CD4-positive, alpha-beta memory T cell (primary cell): ENCODE measurements at regions of chr10 and their contacts with region 1.

Region 1: DNA sequence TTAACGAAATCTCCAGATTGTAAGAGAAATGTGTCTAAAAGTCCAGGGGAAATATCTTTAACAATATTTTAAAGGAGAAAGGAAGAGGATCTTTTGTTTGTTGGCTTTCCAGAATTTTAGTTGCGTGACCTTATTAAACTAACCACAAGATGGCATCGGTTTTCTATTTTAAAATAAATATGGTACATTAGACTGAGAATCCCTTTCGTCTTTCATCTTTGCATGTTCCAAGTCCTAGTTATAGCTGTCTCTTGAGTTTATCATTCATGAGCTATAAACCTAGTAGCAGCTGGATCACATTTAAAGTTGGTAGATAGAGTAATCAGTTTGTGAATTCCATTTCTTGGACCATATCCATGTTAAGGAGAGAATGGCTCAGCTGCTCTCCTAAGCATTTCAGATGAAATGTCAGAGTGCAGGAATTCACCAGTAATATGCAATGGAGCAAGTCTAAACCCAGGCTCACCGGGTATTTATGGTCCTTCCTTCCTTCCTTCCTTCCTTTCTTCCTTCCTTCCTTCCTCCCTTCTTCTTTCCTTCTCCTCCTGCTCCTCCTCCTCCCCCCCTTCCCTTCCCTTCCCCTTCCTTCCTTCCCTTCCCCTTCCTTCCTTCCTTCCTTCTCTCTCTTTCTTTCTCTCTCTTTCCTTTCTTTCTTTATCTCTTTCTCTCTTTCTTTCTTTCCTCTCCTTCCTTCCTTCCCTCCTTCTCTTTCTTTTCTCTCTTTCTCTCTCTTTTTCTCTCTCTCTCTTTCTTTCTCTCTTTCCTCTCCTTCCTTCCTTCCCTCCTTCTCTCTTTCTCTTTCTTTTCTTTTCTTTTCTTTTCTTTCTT is 57.8 kb upstream of the RAB18 start:
- DNase-seq: peak in 4 of 5 donors; percentile 46 to 50 (median 47)
- H3K4me3 ChIP-seq: no peak overlapping the region
- H3K4me3 Mint-ChIP-seq: peak overlapping the region in 3 of 8 donors; percentile 13 to 41 (median 36)
- H3K27ac ChIP-seq: no peak overlapping the region
- H3K27ac Mint-ChIP-seq: peak overlapping the region in 2 of 7 donors; percentile 8 to 45
- H3K4me1 ChIP-seq: peaks cover 12% of the 10 kb centered on the region
- H3K4me1 Mint-ChIP-seq: peaks cover 3 to 17% (median 13%) of the 10 kb centered on the region in 4 donors
- H3K27me3 ChIP-seq: no peaks in the 10 kb centered on the region
- H3K27me3 Mint-ChIP-seq: no peaks in the 10 kb centered on the region

Region 2: GRCh38 chr10:27464993-27465392 is 18.7 kb after region 1 on chr10:
- CTCF ChIA-PET with region 1: interaction called, 5 read pairs
- POLR2A ChIA-PET with region 1: interaction called, 5 read pairs
- intact Hi-C with region 1: loop called (anchors 1 kb)
- DNase-seq: peak; percentile 39 to 52 (median 50)
- H3K4me3 ChIP-seq: no peak overlapping the region
- H3K4me3 Mint-ChIP-seq: peak overlapping the region in 7 of 8 donors; percentile 61 to 76 (median 65)
- H3K27ac ChIP-seq: peak overlapping the region; percentile 2
- H3K27ac Mint-ChIP-seq: peak overlapping the region; percentile 79 to 94 (median 92)
- H3K4me1 ChIP-seq: peaks cover 26% of the 10 kb centered on the region
- H3K4me1 Mint-ChIP-seq: peaks cover 30 to 42% (median 36%) of the 10 kb centered on the region in 4 donors
- H3K27me3 ChIP-seq: no peaks in the 10 kb centered on the region
- H3K27me3 Mint-ChIP-seq: no peaks in the 10 kb centered on the region

Region 3: DNA sequence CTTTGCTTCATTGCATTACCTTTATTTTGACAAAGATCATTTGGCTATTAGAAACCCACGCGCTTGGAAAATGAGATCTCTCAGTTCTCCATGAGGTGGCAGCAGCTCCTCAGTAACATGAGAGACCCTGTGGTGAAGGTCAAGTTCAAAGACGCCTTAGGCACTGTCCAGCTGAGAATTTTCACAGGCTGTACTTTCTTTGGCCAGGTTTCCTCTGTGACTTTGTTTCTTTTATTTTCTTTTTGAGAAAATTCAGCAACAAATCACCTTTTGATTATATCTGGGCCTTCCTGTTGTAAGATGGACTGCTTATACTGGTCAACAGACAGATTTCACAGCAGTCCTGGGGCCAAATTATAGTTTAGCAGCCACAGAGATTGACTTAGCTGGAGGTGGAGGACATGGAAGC is 112.3 kb after region 1 on chr10:
- CTCF ChIA-PET with region 1: interaction called, 18 read pairs
- POLR2A ChIA-PET with region 1: no interaction called
- intact Hi-C with region 1: loop called (anchors 5 kb)
- DNase-seq: peak in 3 of 5 donors; percentile 19 to 38 (median 31)
- H3K4me3 ChIP-seq: no peak overlapping the region
- H3K4me3 Mint-ChIP-seq: no peak overlapping the region
- H3K27ac ChIP-seq: no peak overlapping the region
- H3K27ac Mint-ChIP-seq: no peak overlapping the region
- H3K4me1 ChIP-seq: no peaks in the 10 kb centered on the region
- H3K4me1 Mint-ChIP-seq: peaks cover 0 to 7% (median under 1%) of the 10 kb centered on the region in 4 donors
- H3K27me3 ChIP-seq: no peaks in the 10 kb centered on the region
- H3K27me3 Mint-ChIP-seq: no peaks in the 10 kb centered on the region

Region 4: GRCh38 chr10:27655296-27655695 is 209.0 kb after region 1 on chr10:
- CTCF ChIA-PET with region 1: interaction called, 16 read pairs
- POLR2A ChIA-PET with region 1: interaction called, 4 read pairs
- intact Hi-C with region 1: no loop called
- DNase-seq: no peak
- H3K4me3 ChIP-seq: no peak overlapping the region
- H3K4me3 Mint-ChIP-seq: no peak overlapping the region
- H3K27ac ChIP-seq: no peak overlapping the region
- H3K27ac Mint-ChIP-seq: peak overlapping the region in 2 of 7 donors; percentile 48 to 68
- H3K4me1 ChIP-seq: no peaks in the 10 kb centered on the region
- H3K4me1 Mint-ChIP-seq: peaks cover 0 to 9% (median 2%) of the 10 kb centered on the region in 4 donors
- H3K27me3 ChIP-seq: no peaks in the 10 kb centered on the region
- H3K27me3 Mint-ChIP-seq: peaks cover 8 to 9% of the 10 kb centered on the region in 2 donors

Region 5: GRCh38 chr10:27661514-27662286 is 215.4 kb after region 1 on chr10:
- CTCF ChIA-PET with region 1: interaction called, 16 read pairs
- POLR2A ChIA-PET with region 1: no interaction called
- intact Hi-C with region 1: no loop called
- DNase-seq: no peak
- H3K4me3 ChIP-seq: no peak overlapping the region
- H3K4me3 Mint-ChIP-seq: no peak overlapping the region
- H3K27ac ChIP-seq: no peak overlapping the region
- H3K27ac Mint-ChIP-seq: no peak overlapping the region
- H3K4me1 ChIP-seq: no peaks in the 10 kb centered on the region
- H3K4me1 Mint-ChIP-seq: peaks cover 0 to 4% (median under 1%) of the 10 kb centered on the region in 4 donors
- H3K27me3 ChIP-seq: peaks cover 7% of the 10 kb centered on the region
- H3K27me3 Mint-ChIP-seq: peaks cover 15 to 16% of the 10 kb centered on the region in 2 donors

Region 6: DNA sequence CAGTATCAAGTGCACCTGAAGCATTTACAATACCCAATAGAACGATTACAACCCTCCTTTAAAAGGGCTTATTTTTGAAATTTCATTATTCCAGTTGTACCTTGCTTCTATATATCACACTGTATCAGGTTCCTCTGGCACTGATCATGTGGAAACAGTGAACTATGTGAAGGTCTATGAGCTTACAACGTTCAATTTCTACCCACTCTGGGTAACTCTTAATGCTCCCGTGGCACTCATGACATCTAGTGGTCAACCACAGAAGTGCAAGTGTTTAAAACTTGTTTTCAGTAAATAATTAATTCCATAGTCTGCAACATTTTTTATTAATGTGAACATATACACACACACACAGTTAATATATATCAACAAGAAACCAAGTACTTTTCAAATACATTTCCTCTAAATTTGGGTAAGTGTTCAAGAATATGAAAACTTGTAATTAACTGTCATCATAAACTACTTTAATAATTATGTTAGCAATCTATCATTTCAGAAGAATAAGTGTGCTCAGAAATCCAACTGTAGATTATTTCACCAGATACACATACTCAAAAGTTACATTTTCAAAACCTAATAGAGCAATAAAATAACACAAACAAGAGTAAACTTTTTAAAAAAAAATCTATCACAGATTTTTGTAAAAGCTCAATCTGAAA is 795.6 kb after region 1 on chr10:
- CTCF ChIA-PET with region 1: no interaction called
- POLR2A ChIA-PET with region 1: no interaction called
- intact Hi-C with region 1: loop called (anchors 1 kb)
- DNase-seq: peak in 4 of 5 donors; percentile 36 to 49 (median 42)
- H3K4me3 ChIP-seq: no peak overlapping the region
- H3K4me3 Mint-ChIP-seq: no peak overlapping the region
- H3K27ac ChIP-seq: no peak overlapping the region
- H3K27ac Mint-ChIP-seq: no peak overlapping the region
- H3K4me1 ChIP-seq: peaks cover 14% of the 10 kb centered on the region
- H3K4me1 Mint-ChIP-seq: peaks cover 13 to 20% (median 17%) of the 10 kb centered on the region in 4 donors
- H3K27me3 ChIP-seq: no peaks in the 10 kb centered on the region
- H3K27me3 Mint-ChIP-seq: no peaks in the 10 kb centered on the region